AG04450 (cell line): ENCODE measurements at regions of chr17 and their contacts with region 1.

Region 1: GRCh38 chr17:8057691-8058114 is 18.8 kb downstream of the ALOX15B start:
- DNase-seq: peak; percentile 51
- H3K4me3 ChIP-seq: no peak overlapping the region
- H3K27ac ChIP-seq: no peak overlapping the region
- H3K27me3 ChIP-seq: peaks cover 40% of the 10 kb centered on the region
- CTCF ChIP-seq: peak; percentile 76

Region 2: DNA sequence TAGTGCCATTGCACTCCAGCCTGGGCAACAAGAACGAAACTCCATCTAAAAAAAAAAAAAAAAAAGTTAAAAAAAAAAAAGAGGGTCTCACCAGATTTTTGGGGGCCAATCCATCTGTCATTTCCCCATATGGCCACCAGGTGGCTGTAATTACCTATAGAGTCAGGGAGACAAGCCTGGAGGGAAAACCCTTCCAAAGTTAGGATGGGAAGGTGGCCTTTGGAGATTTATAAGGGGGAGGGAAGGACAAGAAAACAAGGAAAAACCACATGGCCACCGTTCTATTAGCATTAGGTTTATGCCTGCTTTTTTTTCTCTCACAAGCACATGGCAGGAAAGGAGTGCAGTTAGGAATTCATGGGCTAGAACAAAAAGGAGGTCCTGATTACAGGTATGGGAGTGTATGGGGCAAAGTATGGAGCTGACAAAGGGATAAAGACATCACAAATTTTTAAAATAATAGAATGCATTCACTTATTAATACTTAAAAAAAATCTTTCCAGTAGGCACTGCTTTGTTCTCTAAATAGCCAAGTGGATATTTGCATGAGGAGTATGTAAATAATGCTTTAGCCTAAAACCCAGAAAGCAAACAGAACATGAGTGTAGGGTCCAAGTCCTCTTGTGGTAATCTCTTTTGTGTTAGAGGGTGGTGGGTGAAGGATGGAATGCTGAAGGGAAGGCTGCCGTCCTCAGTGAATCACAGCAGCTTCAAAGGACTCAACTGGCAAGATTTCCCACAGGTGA is 194.8 kb before region 1 on chr17:
- CTCF ChIA-PET with region 1: interaction called, 21 read pairs
- POLR2A ChIA-PET with region 1: no interaction called
- DNase-seq: no peak
- H3K4me3 ChIP-seq: no peak overlapping the region
- H3K27ac ChIP-seq: no peak overlapping the region
- H3K27me3 ChIP-seq: no peaks in the 10 kb centered on the region
- CTCF ChIP-seq: peak; percentile 74

Region 3: DNA sequence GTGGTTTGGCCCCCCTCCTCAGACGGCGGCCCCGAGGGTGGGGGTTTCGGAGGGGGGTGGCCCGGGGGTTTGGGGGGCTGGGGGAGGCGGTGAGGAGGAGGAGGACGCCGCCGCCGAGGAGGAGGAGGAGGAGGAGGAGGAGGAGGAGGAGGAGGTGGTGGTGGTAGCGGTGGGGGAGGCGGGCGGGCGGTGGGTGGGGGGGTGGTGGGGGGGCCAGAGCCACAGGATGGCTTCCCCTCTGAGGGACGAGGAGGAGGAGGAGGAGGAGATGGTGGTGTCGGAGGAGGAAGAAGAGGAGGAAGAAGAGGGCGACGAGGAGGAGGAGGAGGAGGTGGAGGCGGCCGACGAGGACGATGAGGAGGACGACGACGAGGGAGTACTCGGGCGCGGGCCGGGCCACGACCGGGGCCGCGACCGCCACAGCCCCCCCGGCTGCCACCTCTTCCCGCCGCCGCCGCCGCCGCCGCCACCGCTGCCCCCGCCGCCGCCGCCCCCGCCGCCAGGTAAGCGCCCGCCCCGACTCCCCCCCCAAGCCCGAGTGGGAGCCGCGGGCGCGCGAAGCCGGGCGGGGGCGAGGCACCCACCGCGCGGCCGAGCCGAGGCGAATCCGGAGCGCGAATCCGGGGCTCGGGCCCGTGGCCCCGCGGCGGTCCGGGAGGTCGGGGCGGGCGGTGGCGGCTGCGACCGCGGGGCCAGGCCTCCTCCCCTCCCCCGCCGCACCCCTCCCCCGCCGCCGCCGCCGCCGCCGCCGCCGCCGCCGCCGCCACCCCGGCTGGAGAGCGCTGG is 172.9 kb before region 1 on chr17:
- CTCF ChIA-PET with region 1: no interaction called
- POLR2A ChIA-PET with region 1: no interaction called
- DNase-seq: no peak
- H3K4me3 ChIP-seq: peak overlapping the region; percentile 79
- H3K27ac ChIP-seq: peak overlapping the region; percentile 94
- H3K27me3 ChIP-seq: no peaks in the 10 kb centered on the region
- CTCF ChIP-seq: no peak

Region 4: DNA sequence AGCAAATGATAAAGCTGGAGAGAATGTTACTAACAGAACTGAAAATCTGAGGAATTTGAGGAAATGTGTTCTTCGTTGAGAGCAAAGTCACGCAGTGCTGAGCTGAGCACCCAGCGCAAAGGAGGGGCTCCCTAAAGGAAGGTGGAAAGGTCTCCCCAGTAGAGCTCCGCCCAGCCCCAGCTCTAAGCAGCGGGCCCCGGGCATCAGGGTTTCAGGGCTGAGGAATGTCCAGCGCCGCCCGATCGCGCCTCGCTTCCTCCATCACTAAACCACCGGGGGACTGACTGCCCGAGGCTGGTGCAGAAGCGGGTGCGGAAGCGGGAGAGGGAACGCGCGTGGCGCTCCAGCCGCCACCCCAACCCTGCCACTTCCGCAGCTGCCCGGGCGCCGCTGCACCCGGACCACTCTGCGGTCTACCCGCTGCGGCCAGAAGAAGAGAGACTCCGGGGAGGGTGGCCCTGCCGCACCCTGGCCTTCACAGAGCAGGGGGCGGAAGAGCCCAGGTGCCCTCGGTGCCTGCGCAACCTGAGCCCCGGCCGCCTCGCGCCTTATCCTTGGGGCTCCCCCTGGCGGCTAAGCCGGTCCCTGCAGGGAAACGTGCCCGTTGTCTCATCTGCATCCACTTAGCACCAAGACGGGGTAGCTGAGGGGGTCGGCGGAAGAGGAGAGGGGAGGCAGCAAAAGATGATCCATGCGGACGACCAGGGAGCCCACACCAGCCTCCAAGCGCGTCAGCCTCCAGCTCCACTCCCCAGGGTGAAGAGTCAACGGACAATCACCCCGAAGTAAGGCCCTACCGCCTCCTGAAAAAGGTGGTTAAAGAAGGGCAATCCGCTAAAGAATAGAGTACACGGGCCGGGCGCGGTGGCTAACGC is 67.7 kb before region 1 on chr17:
- CTCF ChIA-PET with region 1: interaction called, 19 read pairs
- POLR2A ChIA-PET with region 1: no interaction called
- DNase-seq: no peak
- H3K4me3 ChIP-seq: peak overlapping the region; percentile 65
- H3K27ac ChIP-seq: no peak overlapping the region
- H3K27me3 ChIP-seq: peaks cover 10% of the 10 kb centered on the region
- CTCF ChIP-seq: peak; percentile 96

Region 5: DNA sequence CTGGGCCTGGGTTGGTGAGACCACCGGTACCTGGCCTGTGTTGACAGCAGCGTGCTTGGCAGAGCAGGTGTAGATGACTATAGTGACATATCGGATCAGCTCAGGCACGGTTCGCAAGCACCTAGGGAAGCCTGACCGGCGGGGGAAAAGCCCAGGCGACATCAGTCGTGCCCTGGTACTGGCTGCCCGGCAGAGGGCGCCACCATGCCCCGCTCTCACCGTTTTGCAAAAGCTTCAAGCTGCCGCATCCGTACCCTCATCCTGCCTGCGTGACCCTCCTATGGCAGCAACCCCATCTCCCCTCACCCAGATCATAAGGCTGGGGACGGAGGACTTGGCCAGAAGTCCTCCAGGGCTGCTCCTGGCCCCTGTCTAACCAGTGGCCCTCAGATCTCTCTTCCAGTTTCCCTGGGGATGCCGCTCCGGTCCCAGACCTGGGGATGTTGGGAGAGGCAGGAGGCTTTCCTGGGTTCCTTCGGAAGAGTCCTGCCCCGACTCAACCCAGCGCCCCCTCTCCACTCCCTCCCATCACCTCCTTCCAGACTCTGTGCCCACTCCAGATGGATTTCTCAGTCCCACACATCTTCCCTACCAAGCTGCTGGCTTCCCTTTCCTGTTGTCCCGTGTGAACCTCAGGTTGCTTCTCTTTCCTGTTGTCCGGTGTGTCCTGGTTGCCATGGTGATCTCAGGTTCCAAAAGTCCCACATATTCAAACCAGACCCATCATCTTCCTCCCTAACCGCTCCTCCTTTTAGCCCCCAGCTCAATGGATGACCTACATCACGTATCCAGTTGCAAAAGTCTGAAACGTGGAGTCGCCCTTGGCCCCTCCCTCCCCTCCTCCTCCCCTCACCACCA is 16.2 kb after region 1 on chr17:
- CTCF ChIA-PET with region 1: interaction called, 124 read pairs
- POLR2A ChIA-PET with region 1: interaction called, 5 read pairs
- DNase-seq: no peak
- H3K4me3 ChIP-seq: no peak overlapping the region
- H3K27ac ChIP-seq: peak overlapping the region; percentile 11
- H3K27me3 ChIP-seq: peaks cover 72% of the 10 kb centered on the region
- CTCF ChIP-seq: peak; percentile 83

Region 6: DNA sequence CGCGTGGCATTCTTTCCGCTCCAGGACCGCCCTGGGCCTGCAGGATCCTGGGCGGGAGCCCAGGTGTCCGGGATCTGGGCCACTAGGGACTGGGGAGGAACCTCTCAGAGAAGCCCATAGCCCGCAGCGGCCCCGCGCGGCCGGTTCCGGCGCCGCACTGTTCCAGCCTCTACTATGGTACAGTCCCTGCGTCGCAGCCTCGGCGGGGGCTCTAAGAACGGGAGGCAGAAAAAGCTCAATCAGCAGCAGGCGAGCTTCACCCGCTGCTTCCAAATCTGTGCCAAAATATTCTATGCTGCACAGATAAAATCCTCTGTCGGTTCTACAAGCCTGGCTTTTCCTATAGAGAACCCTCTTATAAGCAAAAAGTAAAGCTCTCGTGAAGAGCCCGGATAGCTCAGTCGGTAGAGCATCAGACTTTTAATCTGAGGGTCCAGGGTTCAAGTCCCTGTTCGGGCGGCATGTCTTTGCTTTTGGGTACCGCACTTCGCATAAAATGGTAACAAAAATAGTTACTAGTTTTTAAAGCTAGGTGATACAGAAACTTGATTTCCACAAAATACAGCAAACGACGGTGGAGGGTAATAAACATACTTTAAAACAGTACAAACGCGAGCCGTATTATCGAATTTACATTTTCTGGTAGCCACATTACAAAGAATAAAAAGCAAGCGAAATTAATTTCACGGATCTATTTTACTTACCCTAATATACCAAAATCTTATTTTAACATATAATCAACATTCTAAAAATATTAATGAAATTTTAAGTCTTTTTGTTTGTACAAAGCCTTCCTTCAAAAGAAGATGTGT is 61.3 kb after region 1 on chr17:
- CTCF ChIA-PET with region 1: interaction called, 71 read pairs
- POLR2A ChIA-PET with region 1: interaction called, 5 read pairs
- DNase-seq: peak; percentile 59
- H3K4me3 ChIP-seq: peak overlapping the region; percentile 76
- H3K27ac ChIP-seq: peak overlapping the region; percentile 31
- H3K27me3 ChIP-seq: peaks cover 32% of the 10 kb centered on the region
- CTCF ChIP-seq: peak; percentile 90

Region 7: DNA sequence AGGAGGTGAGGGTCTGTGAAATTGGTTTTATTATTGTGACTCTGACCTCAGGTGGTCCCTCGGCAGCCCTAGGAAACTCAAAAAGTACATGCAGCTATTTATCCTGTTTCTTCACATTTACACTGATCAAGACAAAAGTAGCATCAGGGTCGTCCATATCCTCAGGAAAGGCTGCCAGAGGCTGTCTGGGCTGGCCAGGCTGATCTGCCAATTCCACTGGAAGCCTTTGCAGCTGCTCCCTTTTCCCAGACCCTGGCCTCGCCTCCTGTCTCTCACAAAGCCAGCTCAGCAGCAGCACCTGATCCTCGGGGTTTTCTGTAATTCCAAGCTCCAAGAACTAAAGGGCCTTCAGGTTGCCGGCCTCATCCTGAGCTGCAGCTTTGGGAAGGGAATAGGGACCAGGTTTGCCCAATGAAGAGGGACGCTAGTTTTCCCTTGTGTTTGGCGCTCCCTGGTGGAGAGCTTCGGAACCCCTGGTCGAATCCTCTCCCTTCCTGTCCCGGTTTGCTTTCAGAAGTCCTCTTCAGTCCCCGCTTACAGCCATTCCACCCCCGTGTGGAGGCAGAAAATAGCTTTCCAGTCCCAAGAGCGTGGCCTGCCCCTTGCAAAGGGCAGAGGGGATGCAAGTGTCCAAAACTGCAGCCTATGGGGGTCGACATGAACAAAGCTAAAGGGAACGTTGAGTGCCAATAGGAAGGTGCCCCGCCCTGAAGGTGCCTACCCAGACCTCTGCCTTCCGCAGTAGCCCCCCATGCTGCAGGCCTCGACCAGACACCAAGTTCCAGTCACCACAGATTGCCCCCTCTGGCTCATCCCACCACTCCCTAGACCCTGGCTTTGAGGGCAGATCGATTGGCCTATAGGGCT is 728.1 kb after region 1 on chr17:
- CTCF ChIA-PET with region 1: interaction called, 10 read pairs
- POLR2A ChIA-PET with region 1: no interaction called
- DNase-seq: peak; percentile 29
- H3K4me3 ChIP-seq: no peak overlapping the region
- H3K27ac ChIP-seq: no peak overlapping the region
- H3K27me3 ChIP-seq: peaks cover 8% of the 10 kb centered on the region
- CTCF ChIP-seq: peak; percentile 90